Prostate gland (tissue), 2 donors: ENCODE measurements at regions of chr5 and their contacts with region 1.

Region 1: DNA sequence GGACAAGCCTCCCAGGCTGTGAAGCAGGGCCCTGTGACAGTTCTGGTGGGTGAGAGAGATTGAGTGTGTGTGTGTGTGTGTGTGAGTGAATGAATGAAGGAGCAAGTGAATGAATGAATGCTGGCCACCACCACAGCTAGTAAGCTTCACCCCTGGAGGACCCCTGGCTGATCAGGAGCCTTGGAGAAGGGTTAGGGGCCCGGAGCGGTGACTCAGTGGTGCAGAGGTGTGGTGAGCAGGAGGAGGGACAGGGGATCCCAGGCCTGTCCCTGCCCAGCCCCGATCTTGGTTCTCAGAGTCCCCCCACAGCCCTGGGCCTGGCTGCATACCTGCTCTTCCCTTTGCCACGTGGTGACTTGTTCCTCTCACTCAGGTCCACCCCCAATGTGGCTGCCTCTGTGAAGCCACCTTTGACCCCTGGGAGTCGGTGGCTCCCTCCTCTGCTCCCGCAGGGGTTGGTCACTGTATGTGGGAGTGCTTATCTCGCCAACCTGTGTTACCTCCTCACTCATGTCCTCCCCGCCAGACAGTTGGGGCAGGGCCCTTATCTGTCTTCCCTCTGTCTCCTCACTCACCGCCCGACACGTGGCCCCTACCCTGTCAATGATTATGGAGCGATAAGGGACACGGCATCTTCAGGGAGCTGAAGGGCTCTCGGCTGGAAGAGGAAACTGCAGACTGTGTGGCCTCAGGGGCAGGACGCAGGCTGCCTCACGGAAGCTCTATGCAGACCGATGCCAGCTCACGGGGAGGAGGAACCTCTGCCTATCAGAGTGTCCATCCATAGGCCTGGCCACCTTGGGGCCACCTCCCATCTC is 99.9 kb upstream of the PITX1 start:
- DNase-seq: no peak
- H3K4me3 ChIP-seq: no peak overlapping the region
- H3K27ac ChIP-seq: no peak overlapping the region
- H3K4me1 ChIP-seq: no peaks in the 10 kb centered on the region
- H3K27me3 ChIP-seq: no peaks in the 10 kb centered on the region
- CTCF ChIP-seq: no peak
- POLR2A ChIP-seq: no peak

Region 2: DNA sequence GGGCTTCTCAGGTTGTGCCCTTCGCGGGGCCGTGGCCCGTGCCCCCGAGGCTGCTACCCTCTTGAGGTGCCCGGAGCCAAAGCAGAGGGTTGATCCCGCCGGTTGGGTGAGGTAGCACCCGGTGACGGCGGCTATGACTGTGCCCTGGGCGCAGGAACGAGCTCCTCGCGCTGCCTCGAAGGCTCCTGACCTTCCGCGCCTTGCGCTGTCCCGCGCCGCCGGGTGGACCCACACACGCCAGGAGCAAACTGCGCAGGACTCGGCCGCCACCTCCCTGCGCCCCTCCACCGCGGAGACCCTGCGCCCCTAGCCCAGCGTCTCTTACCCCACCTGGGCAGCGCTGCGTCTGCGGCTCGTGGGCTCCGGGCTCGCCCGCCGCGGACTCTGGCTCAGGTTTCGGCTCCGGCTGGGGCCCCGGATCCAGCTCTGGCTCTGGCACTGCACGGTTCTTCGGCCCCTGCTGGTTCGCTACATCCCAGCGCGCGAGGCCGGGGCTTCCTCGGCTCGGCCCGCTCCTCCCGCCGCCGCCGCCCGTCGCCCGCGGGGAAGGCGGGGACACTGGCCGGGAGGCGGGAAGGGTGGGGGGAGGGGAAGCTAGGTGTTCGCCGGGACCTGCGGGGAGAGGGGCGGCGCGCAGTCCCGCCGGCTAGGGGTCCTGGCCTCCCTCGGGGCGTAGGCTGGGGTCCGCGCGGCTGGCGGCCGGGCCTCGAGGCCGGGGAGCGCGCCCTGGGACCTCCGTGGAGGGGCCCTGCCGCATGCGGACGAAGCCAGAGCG is 94.4 kb before region 1 on chr5:
- intact Hi-C with region 1: loop called (anchors 5 kb)
- DNase-seq: no peak
- H3K4me3 ChIP-seq: peak overlapping the region; percentile 9 to 18
- H3K27ac ChIP-seq: peak overlapping the region in 1 of 2 donors; percentile 32
- H3K4me1 ChIP-seq: no peaks in the 10 kb centered on the region
- H3K27me3 ChIP-seq: peaks cover 15% of the 10 kb centered on the region
- CTCF ChIP-seq: no peak
- POLR2A ChIP-seq: no peak